ENCODE measurements at regions of chr17 and their contacts with region 1.

Region 1: GRCh38 chr17:27236717-27237315 is 57.1 kb upstream of the WSB1 start:
- DNase-seq: peak; percentile 67 to 85 (median 68)
- ATAC-seq: peak; percentile 53 to 62
- H3K4me3 ChIP-seq: no peak overlapping the region
- H3K27ac ChIP-seq: no peak overlapping the region
- H3K4me1 ChIP-seq: peaks cover 4% of the 10 kb centered on the region
- H3K27me3 ChIP-seq: no peaks in the 10 kb centered on the region

Region 2: DNA sequence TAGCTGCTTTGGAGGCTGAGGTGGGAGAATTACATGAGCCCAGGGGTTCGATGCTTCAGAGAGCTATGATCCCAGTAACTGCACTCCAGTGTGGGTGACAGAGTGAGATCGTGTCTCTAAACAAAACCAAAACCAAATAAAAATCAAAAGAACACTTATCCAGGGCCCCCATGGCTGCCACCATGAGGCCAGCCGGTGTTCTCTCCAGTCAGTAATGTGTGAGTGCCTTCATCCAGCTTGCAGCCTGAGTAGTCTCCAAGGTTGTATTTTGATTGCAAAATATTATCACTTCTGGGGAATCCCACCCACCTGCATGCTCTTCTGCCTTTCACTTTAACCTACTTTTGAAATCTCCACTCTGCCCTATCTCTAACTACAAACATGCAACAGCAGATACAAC is 163.9 kb before region 1 on chr17:
- intact Hi-C with region 1: no loop called
- DNase-seq: no peak
- ATAC-seq: no peak
- H3K4me3 ChIP-seq: no peak overlapping the region
- H3K27ac ChIP-seq: no peak overlapping the region
- H3K4me1 ChIP-seq: no peaks in the 10 kb centered on the region
- H3K27me3 ChIP-seq: no peaks in the 10 kb centered on the region

Region 3: GRCh38 chr17:27091043-27091497 is 145.7 kb before region 1 on chr17:
- intact Hi-C with region 1: no loop called
- DNase-seq: no peak
- ATAC-seq: no peak
- H3K4me3 ChIP-seq: no peak overlapping the region
- H3K27ac ChIP-seq: no peak overlapping the region
- H3K4me1 ChIP-seq: no peaks in the 10 kb centered on the region
- H3K27me3 ChIP-seq: no peaks in the 10 kb centered on the region

Region 4: GRCh38 chr17:27332485-27333409 is 95.9 kb after region 1 on chr17:
- intact Hi-C with region 1: loop called (anchors 2 to 10 kb)
- DNase-seq: peak; percentile 99 to 100 (median 99)
- ATAC-seq: peak; percentile 97
- H3K4me3 ChIP-seq: peak overlapping the region; percentile 56
- H3K27ac ChIP-seq: peak overlapping the region; percentile 99
- H3K4me1 ChIP-seq: peaks cover 2% of the 10 kb centered on the region
- H3K27me3 ChIP-seq: no peaks in the 10 kb centered on the region

Region 5: GRCh38 chr17:27345141-27345904 is 108.5 kb after region 1 on chr17:
- intact Hi-C with region 1: loop called in 2 of 4 experiments (anchors 5 kb)
- DNase-seq: no peak
- ATAC-seq: peak; percentile 7 to 37
- H3K4me3 ChIP-seq: no peak overlapping the region
- H3K27ac ChIP-seq: peak overlapping the region; percentile 2
- H3K4me1 ChIP-seq: peaks cover 9% of the 10 kb centered on the region
- H3K27me3 ChIP-seq: no peaks in the 10 kb centered on the region

Region 6: GRCh38 chr17:27601069-27601975 is 364.5 kb after region 1 on chr17:
- intact Hi-C with region 1: loop called (anchors 2 to 10 kb)
- DNase-seq: peak; percentile 75 to 91 (median 86)
- ATAC-seq: peak; percentile 33 to 70
- H3K4me3 ChIP-seq: no peak overlapping the region
- H3K27ac ChIP-seq: no peak overlapping the region
- H3K4me1 ChIP-seq: no peaks in the 10 kb centered on the region
- H3K27me3 ChIP-seq: no peaks in the 10 kb centered on the region

Measured in right cardiac atrium (tissue), 5 donors.